ENCODE measurements at regions of chr7 and their contacts with region 1.

Region 1: GRCh38 chr7:100889761-100890634 is 483 bp upstream of the UFSP1 start:
- DNase-seq: peak; percentile 94 to 96
- H3K4me3 ChIP-seq: peak overlapping the region; percentile 67
- H3K4me3 Mint-ChIP-seq: peak overlapping the region; percentile 88
- H3K27ac Mint-ChIP-seq: peak overlapping the region; percentile 87
- H3K4me1 ChIP-seq: peaks cover 29% of the 10 kb centered on the region
- H3K4me1 Mint-ChIP-seq: peaks cover 50% of the 10 kb centered on the region
- H3K27me3 ChIP-seq: no peaks in the 10 kb centered on the region
- H3K27me3 Mint-ChIP-seq: no peaks in the 10 kb centered on the region
- CTCF ChIP-seq: no peak

Region 2: DNA sequence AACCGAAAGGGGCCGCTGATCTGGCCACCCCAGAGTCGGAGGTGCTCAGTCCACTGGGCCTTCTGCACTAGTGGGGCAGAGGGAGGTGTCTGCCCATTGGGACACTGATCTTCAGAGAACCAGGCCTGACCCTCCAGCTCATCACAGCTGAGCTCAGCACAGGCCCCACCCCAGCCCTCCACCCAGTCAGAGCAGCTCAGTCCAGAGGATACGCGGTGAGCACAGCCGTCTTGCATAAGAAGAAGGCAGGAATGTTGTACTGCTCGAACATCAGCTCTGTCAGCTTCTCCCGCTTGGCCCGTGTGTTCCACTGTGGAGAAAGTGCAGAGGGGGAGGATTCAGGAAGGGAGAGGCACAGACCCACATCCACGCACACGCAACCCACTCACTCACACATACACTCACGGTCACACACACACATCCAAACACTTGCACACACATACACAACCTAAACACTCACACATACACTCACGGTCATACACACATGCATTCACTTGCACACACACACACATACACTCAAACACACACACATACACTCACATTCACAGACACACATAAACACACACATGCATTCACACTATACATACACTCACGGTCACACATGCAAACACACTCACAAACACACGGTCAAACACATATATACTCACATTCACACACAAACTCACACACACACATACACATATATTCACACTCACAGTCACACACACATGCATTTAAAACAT is 240.0 kb before region 1 on chr7:
- CTCF ChIA-PET with region 1: no interaction called
- POLR2A ChIA-PET with region 1: no interaction called
- intact Hi-C with region 1: no loop called
- DNase-seq: peak; percentile 71 to 73
- H3K4me3 ChIP-seq: no peak overlapping the region
- H3K4me3 Mint-ChIP-seq: no peak overlapping the region
- H3K27ac Mint-ChIP-seq: no peak overlapping the region
- H3K4me1 ChIP-seq: peaks cover 6% of the 10 kb centered on the region
- H3K4me1 Mint-ChIP-seq: peaks cover 7% of the 10 kb centered on the region
- H3K27me3 ChIP-seq: no peaks in the 10 kb centered on the region
- H3K27me3 Mint-ChIP-seq: no peaks in the 10 kb centered on the region
- CTCF ChIP-seq: no peak

Region 3: GRCh38 chr7:100837099-100837836 is 52.7 kb before region 1 on chr7:
- CTCF ChIA-PET with region 1: interaction called, 14 read pairs
- POLR2A ChIA-PET with region 1: no interaction called
- intact Hi-C with region 1: no loop called
- DNase-seq: peak; percentile 92 to 93
- H3K4me3 ChIP-seq: peak overlapping the region; percentile 42
- H3K4me3 Mint-ChIP-seq: peak overlapping the region; percentile 39
- H3K27ac Mint-ChIP-seq: peak overlapping the region; percentile 85
- H3K4me1 ChIP-seq: peaks cover 13% of the 10 kb centered on the region
- H3K4me1 Mint-ChIP-seq: peaks cover 35% of the 10 kb centered on the region
- H3K27me3 ChIP-seq: no peaks in the 10 kb centered on the region
- H3K27me3 Mint-ChIP-seq: no peaks in the 10 kb centered on the region
- CTCF ChIP-seq: no peak

Region 4: GRCh38 chr7:100874577-100875355 is 15.2 kb before region 1 on chr7 and contains the start of gene SRRT:
- CTCF ChIA-PET with region 1: interaction called, 22 read pairs
- POLR2A ChIA-PET with region 1: interaction called, 76 read pairs
- intact Hi-C with region 1: loop called (anchors 1 kb)
- DNase-seq: peak; percentile 98 to 99
- H3K4me3 ChIP-seq: peak within 1 kb of the TSS; percentile 81
- H3K4me3 Mint-ChIP-seq: peak within 1 kb of the TSS; percentile 85
- H3K27ac Mint-ChIP-seq: peak within 1 kb of the TSS; percentile 98
- H3K4me1 ChIP-seq: peaks cover 10% of the 10 kb centered on the region; the same call in 1 of the 2 replicates
- H3K4me1 Mint-ChIP-seq: peaks cover 14% of the 10 kb centered on the region
- H3K27me3 ChIP-seq: no peaks in the 10 kb centered on the region
- H3K27me3 Mint-ChIP-seq: no peaks in the 10 kb centered on the region
- CTCF ChIP-seq: peak; percentile 33 to 48
- total RNA-seq, gene SRRT: 211 and 243 TPM in 2 replicates

Region 5: GRCh38 chr7:100959894-100960293 is 69.9 kb after region 1 on chr7:
- CTCF ChIA-PET with region 1: no interaction called
- POLR2A ChIA-PET with region 1: no interaction called
- intact Hi-C with region 1: no loop called
- DNase-seq: no peak
- H3K4me3 ChIP-seq: no peak overlapping the region
- H3K4me3 Mint-ChIP-seq: no peak overlapping the region
- H3K27ac Mint-ChIP-seq: no peak overlapping the region
- H3K4me1 ChIP-seq: no peaks in the 10 kb centered on the region
- H3K4me1 Mint-ChIP-seq: no peaks in the 10 kb centered on the region
- H3K27me3 ChIP-seq: no peaks in the 10 kb centered on the region
- H3K27me3 Mint-ChIP-seq: peaks cover 4% of the 10 kb centered on the region
- CTCF ChIP-seq: no peak

Region 6: DNA sequence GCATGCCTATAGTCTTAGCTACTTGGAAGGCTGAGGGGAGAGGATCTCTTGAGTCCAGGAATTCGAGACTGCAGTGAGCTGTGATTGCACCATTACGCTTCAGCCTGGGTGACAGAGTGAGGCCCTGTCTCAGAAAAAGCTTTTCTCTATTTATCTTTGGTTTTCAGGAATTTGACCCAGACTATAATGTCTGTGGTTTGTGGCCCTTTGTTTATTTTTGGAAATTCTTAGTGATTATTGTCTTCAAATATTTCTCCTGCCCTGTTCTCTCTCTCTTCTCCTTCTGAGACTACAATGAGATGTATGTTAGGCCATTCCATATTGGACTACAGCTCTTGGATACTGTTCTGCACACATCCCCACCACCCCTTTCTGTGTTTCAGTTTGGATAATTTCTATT is 84.0 kb after region 1 on chr7:
- CTCF ChIA-PET with region 1: no interaction called
- POLR2A ChIA-PET with region 1: interaction called, 19 read pairs
- intact Hi-C with region 1: no loop called
- DNase-seq: peak in 1 of 2 experiments; percentile 59
- H3K4me3 ChIP-seq: no peak overlapping the region
- H3K4me3 Mint-ChIP-seq: no peak overlapping the region
- H3K27ac Mint-ChIP-seq: peak overlapping the region; percentile 1
- H3K4me1 ChIP-seq: peaks cover 12% of the 10 kb centered on the region
- H3K4me1 Mint-ChIP-seq: peaks cover 6% of the 10 kb centered on the region
- H3K27me3 ChIP-seq: no peaks in the 10 kb centered on the region
- H3K27me3 Mint-ChIP-seq: no peaks in the 10 kb centered on the region
- CTCF ChIP-seq: no peak

Region 7: DNA sequence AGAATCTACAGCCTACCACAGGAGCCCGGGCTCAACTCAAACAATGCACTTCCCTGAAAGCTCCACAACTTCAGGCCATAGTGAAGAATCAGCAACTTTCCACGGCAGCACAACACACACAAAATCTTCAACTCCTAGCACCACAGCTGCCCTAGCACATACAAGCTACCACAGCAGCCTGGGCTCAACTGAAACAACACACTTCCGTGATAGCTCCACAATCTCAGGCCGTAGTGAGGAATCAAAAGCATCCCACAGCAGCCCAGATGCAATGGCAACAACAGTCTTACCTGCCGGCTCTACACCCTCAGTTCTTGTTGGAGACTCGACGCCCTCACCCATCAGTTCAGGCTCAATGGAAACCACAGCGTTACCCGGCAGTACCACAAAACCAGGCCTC is 101.6 kb after region 1 on chr7:
- CTCF ChIA-PET with region 1: no interaction called
- POLR2A ChIA-PET with region 1: no interaction called
- intact Hi-C with region 1: no loop called
- DNase-seq: no peak
- H3K4me3 ChIP-seq: no peak overlapping the region
- H3K4me3 Mint-ChIP-seq: no peak overlapping the region
- H3K27ac Mint-ChIP-seq: no peak overlapping the region
- H3K4me1 ChIP-seq: no peaks in the 10 kb centered on the region
- H3K4me1 Mint-ChIP-seq: no peaks in the 10 kb centered on the region
- H3K27me3 ChIP-seq: no peaks in the 10 kb centered on the region
- H3K27me3 Mint-ChIP-seq: no peaks in the 10 kb centered on the region
- CTCF ChIP-seq: no peak

Region 8: DNA sequence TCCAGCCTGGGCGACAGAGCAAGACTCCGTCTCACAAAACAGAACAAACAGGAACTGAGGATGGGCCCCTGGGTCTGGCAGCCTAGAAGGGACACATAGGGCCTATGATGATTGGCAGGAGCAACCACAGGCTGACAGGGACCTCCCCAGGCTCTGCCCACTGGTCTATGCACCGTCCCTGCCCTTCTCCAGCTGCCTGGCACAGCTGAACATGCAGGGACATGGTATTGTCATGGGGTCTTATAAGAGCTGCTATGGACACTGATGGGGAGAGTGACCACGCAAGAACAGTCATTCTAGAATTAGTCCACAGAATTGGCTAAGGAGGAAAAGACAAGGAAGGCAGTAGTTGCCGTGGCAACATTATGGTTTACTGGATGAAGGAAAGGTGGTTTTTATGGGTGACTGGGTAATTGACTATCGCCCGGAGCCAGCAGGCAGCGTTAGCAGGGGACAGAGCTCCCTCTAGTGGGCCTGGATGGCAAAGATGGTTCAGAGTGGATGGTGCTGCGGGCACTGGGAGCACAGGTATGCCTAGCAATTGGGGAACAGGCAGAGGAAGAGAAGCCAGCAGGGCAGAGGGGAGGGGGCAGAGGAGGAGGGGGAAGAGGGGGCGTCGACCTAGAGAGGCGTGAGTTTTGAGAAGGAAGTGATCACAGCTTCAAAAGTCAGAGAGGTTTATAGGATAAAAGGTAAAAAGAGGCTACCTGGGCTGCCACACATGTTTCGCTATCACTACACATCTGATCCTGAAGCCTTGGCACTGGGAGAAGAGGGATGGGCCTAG is 187.5 kb after region 1 on chr7:
- CTCF ChIA-PET with region 1: interaction called, 8 read pairs
- POLR2A ChIA-PET with region 1: no interaction called
- intact Hi-C with region 1: loop called (anchors 5 kb)
- DNase-seq: peak; percentile 87 to 91
- H3K4me3 ChIP-seq: no peak overlapping the region
- H3K4me3 Mint-ChIP-seq: no peak overlapping the region
- H3K27ac Mint-ChIP-seq: no peak overlapping the region
- H3K4me1 ChIP-seq: no peaks in the 10 kb centered on the region
- H3K4me1 Mint-ChIP-seq: peaks cover 5% of the 10 kb centered on the region
- H3K27me3 ChIP-seq: no peaks in the 10 kb centered on the region
- H3K27me3 Mint-ChIP-seq: peaks cover 10% of the 10 kb centered on the region
- CTCF ChIP-seq: peak; percentile 69 to 96